ENCODE measurements at regions of chr4 and their contacts with region 1.

Region 1: DNA sequence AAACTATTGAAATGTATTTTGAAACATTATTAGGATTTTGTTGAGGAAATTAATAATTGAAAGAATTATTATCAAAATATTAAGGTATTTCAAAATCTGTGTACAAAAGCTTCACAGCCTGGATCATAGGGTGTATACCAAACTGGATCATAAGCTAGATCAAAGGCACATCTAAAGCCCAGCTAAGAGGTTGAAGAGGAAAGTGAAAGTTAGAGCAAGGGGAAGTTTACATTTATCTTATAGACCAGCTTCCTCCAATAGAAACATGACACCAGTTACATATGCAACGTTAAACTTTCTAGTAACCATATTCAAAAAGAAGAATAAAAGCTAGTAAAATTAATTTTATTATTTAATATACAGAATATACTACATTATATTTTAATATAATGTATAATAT is 227.2 kb upstream of the BMP3 start:
- DNase-seq: no peak
- ATAC-seq: no peak
- H3K4me3 ChIP-seq: no peak overlapping the region
- H3K4me3 Mint-ChIP-seq: no peak overlapping the region
- H3K27ac ChIP-seq: no peak overlapping the region
- H3K27ac Mint-ChIP-seq: no peak overlapping the region
- H3K4me1 ChIP-seq: no peaks in the 10 kb centered on the region
- H3K4me1 Mint-ChIP-seq: peaks cover 0 to 20% (median 3%) of the 10 kb centered on the region in 7 donors
- H3K27me3 ChIP-seq: no peaks in the 10 kb centered on the region
- H3K27me3 Mint-ChIP-seq: no peaks in the 10 kb centered on the region

Region 2: DNA sequence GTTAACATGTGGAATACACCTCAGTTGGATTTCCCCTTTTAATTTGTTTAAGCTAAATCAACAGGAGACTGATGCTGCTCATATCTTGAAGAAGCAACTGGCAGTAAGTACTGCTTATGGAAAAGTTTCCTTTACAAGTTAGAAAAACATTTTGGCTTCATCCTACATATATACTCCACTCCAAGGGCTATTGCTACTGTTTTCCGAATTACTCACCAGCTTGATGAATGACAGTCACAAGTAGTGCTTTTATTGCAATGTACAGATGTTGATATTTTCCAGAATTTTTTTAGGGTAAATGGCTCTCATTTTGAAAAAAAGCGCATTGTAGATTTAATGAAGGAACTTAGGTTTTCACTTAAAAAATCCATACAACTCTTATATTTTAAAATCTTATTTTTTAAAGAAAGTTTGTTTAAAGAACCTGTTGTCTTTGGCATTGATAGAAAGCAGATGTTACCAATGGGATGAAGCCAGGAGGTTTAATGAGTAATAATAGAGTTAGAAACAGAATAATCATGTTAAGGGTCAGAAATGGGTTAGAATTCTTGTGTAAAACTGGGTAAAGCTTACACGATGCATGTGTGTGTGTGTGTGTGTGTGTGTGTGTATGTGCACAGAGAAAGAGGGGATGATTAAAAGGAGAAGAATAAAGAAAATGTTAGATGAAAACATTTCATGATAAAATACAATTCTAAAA is 194.9 kb before region 1 on chr4:
- CTCF ChIA-PET with region 1: no interaction called
- POLR2A ChIA-PET with region 1: no interaction called
- intact Hi-C with region 1: no loop called
- DNase-seq: no peak
- ATAC-seq: no peak
- H3K4me3 ChIP-seq: no peak overlapping the region
- H3K4me3 Mint-ChIP-seq: no peak overlapping the region
- H3K27ac ChIP-seq: no peak overlapping the region
- H3K27ac Mint-ChIP-seq: no peak overlapping the region
- H3K4me1 ChIP-seq: no peaks in the 10 kb centered on the region
- H3K4me1 Mint-ChIP-seq: peaks cover 0 to 30% (median 17%) of the 10 kb centered on the region in 7 donors
- H3K27me3 ChIP-seq: no peaks in the 10 kb centered on the region
- H3K27me3 Mint-ChIP-seq: peaks cover 0 to 5% (median 0%) of the 10 kb centered on the region in 5 donors

Region 3: GRCh38 chr4:80967346-80967745 is 164.0 kb after region 1 on chr4:
- CTCF ChIA-PET with region 1: no interaction called
- POLR2A ChIA-PET with region 1: no interaction called
- intact Hi-C with region 1: loop called in 1 of 2 experiments (anchors 10 kb)
- DNase-seq: no peak
- ATAC-seq: no peak
- H3K4me3 ChIP-seq: no peak overlapping the region
- H3K4me3 Mint-ChIP-seq: no peak overlapping the region
- H3K27ac ChIP-seq: no peak overlapping the region
- H3K27ac Mint-ChIP-seq: no peak overlapping the region
- H3K4me1 ChIP-seq: no peaks in the 10 kb centered on the region
- H3K4me1 Mint-ChIP-seq: no peaks in the 10 kb centered on the region
- H3K27me3 ChIP-seq: no peaks in the 10 kb centered on the region
- H3K27me3 Mint-ChIP-seq: peaks cover 0 to 5% (median 0%) of the 10 kb centered on the region in 5 donors

Measured in naive thymus-derived CD4-positive, alpha-beta T cell (primary cell).